ENCODE measurements at regions of chr4 and their contacts with region 1.

Region 1: DNA sequence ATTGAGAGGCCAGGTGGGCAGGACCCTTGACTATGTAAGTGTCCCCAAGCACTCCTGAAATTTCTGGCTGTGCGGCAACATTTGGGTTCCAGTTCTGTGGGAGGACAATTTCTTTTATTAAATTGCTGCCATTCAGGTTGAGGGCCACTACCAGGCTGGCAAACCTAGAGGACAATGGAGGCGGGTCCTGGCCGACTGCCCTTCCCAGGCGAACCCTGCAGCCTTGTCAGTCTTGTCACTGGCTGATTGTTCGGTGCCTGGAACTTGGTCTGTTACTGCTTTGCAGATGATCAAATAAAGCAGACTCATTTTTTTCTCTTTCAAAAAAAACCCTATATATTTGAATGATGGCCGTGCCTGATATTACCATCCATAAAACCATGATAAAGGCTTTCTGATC is 6.6 kb upstream of the TMEM128 start:
- DNase-seq: no peak
- ATAC-seq: no peak
- H3K4me3 ChIP-seq: no peak overlapping the region
- H3K27ac ChIP-seq: no peak overlapping the region
- H3K4me1 ChIP-seq: no peaks in the 10 kb centered on the region
- H3K27me3 ChIP-seq: no peaks in the 10 kb centered on the region
- CTCF ChIP-seq: no peak

Region 2: DNA sequence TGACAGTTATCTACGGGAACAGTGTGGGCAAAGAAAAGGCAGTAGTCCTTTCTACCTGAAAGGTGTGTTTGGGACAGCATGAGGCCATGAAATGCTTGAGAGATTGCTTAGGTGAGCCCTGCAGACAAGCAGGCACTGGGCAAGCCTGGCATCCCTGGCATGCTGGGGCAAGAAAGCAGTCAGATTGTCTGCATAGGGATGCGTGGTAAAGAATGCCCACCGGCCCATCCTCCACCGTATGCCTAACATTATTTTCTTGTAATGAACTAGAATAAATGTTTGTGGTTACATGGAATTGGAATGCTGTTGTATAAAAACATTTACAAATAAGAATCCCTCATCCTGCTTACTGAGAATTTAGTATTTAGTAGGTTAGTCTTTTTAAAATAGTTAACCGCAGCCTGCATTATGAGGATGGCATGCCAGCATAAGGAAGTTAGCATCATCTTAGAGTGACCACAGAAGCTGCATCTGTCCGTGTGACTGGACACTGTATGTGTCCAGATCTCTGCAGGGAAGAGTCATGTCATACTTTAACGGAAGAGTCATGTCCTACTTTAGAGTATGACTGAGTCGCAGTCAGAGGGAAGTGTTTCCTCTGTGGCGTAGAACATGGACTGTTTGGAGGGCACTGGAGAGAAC is 54.3 kb after region 1 on chr4:
- CTCF ChIA-PET with region 1: no interaction called
- POLR2A ChIA-PET with region 1: no interaction called
- in situ Hi-C with region 1: no loop called
- intact Hi-C with region 1: no loop called
- DNase-seq: no peak
- ATAC-seq: no peak
- H3K4me3 ChIP-seq: no peak overlapping the region
- H3K27ac ChIP-seq: no peak overlapping the region
- H3K4me1 ChIP-seq: no peaks in the 10 kb centered on the region
- H3K27me3 ChIP-seq: no peaks in the 10 kb centered on the region
- CTCF ChIP-seq: no peak

Region 3: DNA sequence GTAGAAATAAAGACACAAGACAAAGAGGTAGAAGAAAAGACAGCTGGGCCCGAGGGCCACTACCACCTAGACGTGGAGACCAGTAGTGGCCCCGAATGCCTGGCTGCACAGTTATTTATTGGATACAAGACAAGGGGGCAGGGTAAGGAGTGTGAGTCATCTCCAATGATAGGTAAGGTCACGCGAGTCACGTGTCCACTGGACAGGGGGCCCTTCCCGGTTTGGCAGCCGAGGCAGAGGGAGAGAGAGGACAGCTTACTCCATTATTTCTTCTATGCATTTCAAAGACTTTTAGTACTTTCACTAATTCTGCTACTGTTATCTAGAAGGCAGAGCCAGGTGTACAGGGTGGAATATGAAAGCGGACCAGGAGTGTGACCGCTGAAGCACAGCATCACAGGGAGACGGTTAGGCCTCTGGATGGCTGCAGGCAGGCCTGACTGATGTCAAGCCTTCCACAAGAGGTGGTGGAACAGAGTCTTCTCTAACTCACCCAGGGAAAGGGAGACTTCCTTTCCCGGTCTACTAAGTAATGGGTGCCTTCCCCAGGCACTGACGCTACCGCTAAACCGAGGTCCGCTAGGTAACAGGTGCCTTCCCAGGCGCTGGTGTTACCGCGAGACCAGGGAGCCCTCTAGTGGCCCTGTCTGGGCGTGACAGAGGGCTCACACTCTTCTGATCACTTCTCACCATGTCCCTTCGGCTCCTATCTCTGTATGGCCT is 80.3 kb after region 1 on chr4:
- CTCF ChIA-PET with region 1: no interaction called
- POLR2A ChIA-PET with region 1: no interaction called
- in situ Hi-C with region 1: no loop called
- intact Hi-C with region 1: loop called (anchors 5 kb)
- DNase-seq: peak; percentile 27
- ATAC-seq: peak; percentile 94
- H3K4me3 ChIP-seq: no peak overlapping the region
- H3K27ac ChIP-seq: no peak overlapping the region
- H3K4me1 ChIP-seq: no peaks in the 10 kb centered on the region
- H3K27me3 ChIP-seq: no peaks in the 10 kb centered on the region
- CTCF ChIP-seq: peak; percentile 82

Region 4: DNA sequence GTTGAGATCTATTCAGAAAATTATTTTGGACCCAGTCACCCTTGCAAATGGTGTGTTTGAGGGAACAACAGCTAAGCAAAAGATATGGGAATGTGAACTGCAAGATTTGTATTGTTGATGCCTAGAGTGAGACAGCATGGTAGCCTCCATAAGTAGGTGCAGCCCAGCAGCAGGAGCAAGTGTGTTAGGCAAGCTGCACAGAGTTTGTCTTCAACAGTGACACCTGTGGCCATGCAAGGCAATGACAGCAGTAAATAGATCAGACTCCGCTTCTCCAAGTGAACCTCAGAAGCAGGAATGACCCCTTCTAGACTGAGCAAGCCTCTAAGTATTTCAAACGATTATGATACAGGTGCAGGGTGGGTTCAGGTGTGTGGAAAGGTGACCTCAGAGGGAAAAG is 471.4 kb after region 1 on chr4:
- CTCF ChIA-PET with region 1: no interaction called
- POLR2A ChIA-PET with region 1: no interaction called
- in situ Hi-C with region 1: no loop called
- intact Hi-C with region 1: no loop called
- DNase-seq: no peak
- ATAC-seq: no peak
- H3K4me3 ChIP-seq: no peak overlapping the region
- H3K27ac ChIP-seq: no peak overlapping the region
- H3K4me1 ChIP-seq: no peaks in the 10 kb centered on the region
- H3K27me3 ChIP-seq: no peaks in the 10 kb centered on the region
- CTCF ChIP-seq: peak; percentile 28; the same call in 1 of the 2 replicates

Measured in Panc1 (cell line).